Left cardiac atrium (tissue), 4 donors: ENCODE measurements at regions of chr19 and their contacts with region 1.

Region 1: GRCh38 chr19:1605236-1606137 is at the start of gene UQCR11:
- DNase-seq: peak; percentile 97
- ATAC-seq: peak; percentile 95 to 97
- total RNA-seq, gene UQCR11: 674 to 933 TPM

Region 2: DNA sequence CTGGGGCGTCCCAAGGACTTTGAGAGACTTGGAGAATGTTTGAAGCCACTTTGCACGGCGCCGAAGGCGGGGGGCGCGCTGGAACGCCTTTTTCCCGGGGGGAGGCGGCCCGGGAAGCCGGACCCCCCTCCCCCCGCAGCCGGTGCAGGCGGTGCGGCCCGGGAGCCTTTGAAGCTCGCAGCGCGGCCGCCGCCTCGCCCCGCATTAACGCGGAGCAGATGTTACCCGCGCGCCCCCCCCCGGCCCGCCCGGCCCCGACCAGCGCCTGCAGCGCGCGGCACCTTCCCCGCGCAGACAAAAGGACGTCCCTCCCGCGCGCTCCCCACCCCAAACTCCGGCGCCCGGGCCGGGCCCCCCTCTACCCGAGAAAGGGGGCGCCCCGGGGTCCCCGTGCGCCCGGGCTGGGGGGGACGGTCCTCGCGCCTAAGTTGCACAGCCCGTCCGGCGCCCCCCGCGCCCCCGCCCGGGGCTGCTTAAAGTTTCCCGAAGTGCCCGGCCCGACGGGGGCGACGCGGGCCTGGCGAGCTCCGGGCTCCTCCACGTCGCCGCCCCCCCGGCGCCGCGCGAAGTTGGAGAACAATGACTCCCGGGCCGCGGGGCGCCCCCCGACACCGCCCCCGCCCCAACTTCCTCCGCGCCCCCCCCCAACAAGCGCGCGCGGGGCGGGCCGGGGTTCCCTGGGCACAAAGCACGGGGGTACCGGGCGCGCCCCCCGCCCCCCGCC is 46.2 kb after region 1 on chr19:
- intact Hi-C with region 1: loop called in 1 of 2 experiments (anchors 2 kb)
- DNase-seq: peak; percentile 60
- ATAC-seq: peak in 1 of 2 donors; percentile 2